Common myeloid progenitor, CD34-positive (primary cell): ENCODE measurements at regions of chr9 and their contacts with region 1.

Region 1: GRCh38 chr9:89375191-89375760 is 57.0 kb downstream of the SECISBP2 start:
- DNase-seq: peak; percentile 75 to 94 (median 91)
- H3K4me3 ChIP-seq: peak overlapping the region in 4 of 7 experiments; percentile 26 to 66 (median 40)
- H3K27ac ChIP-seq: peak overlapping the region; percentile 68 to 75
- H3K4me1 ChIP-seq: peaks cover 8 to 45% (median 35%) of the 10 kb centered on the region in 4 experiments
- H3K27me3 ChIP-seq: no peaks in the 10 kb centered on the region

Region 2: GRCh38 chr9:88741335-88741734 is 633.9 kb before region 1 on chr9:
- CTCF ChIA-PET with region 1: no interaction called
- POLR2A ChIA-PET with region 1: no interaction called
- DNase-seq: peak; percentile 1 to 5 (median 2)
- H3K4me3 ChIP-seq: no peak overlapping the region
- H3K27ac ChIP-seq: no peak overlapping the region
- H3K4me1 ChIP-seq: no peaks in the 10 kb centered on the region
- H3K27me3 ChIP-seq: peaks cover 0 to 58% (median 14%) of the 10 kb centered on the region in 5 experiments

Region 3: GRCh38 chr9:89358985-89359384 is 16.3 kb before region 1 on chr9:
- CTCF ChIA-PET with region 1: interaction called, 22 read pairs
- POLR2A ChIA-PET with region 1: interaction called, 4 read pairs
- DNase-seq: peak; percentile 57 to 89 (median 84)
- H3K4me3 ChIP-seq: no peak overlapping the region
- H3K27ac ChIP-seq: peak overlapping the region; percentile 40 to 50
- H3K4me1 ChIP-seq: peaks cover 3 to 31% (median 17%) of the 10 kb centered on the region in 4 experiments
- H3K27me3 ChIP-seq: no peaks in the 10 kb centered on the region